RWPE1 (cell line): ENCODE measurements at regions of chr4 and their contacts with region 1.

Region 1: DNA sequence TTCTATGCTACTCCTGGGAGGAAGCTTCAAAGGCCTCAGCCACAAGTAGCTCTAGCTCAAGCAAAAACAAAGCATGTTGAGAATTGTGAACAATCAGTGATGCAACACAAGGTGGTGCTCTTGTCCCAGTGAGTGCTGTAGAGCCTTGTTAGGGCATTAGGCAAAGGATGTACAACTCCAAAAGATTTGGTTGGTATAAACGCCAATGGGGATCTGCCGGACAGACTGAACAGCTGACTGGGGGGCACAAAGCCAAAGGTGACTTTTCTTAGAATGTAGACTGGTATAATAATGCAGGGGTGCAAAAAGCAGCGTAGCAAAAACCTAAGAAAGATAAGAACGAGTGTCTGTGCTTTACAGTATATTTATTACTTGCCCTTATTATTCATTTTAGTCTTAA is 62.6 kb upstream of the ALB start:
- DNase-seq: peak; percentile 14
- H3K27ac ChIP-seq: no peak overlapping the region
- CTCF ChIP-seq: peak; percentile 39

Region 2: GRCh38 chr4:72951147-72951546 is 390.3 kb before region 1 on chr4:
- CTCF ChIA-PET with region 1: no interaction called
- POLR2A ChIA-PET with region 1: no interaction called
- DNase-seq: no peak
- H3K27ac ChIP-seq: no peak overlapping the region
- CTCF ChIP-seq: no peak; the same call in 1 of the 2 replicates

Region 3: DNA sequence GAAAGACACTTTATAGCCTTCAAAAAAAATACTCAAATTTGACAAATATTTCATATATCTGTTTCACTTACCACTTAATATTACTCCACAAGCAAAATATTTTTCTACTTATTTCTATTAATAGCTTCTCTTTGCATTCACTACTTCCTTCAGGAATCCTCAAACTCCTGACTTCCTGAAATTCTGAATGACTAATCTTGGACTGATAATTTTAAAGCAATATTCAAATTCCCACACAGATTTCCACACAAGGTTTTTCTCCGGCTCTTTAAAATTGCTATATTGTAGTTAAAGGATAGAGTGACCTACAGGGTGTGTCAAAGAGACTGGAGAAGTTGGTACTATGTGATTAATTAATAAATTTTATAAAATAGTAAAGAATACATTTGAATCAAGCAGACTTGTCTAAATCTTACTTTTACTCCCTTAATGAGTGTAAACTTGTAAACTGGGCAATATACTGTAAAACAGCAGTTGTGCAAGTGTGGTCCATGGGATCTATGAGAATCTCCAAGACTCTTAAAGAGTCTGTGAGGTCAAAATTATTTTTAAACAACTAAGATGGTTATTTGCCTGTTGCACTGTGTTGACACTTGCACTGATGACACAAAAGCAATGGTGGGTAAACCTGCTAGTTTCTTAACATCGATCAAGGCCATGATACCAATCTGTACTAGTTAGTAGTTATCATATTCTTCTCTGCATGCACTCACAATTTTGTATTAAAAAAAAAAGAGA is 127.4 kb before region 1 on chr4:
- CTCF ChIA-PET with region 1: no interaction called
- POLR2A ChIA-PET with region 1: no interaction called
- DNase-seq: no peak
- H3K27ac ChIP-seq: no peak overlapping the region
- CTCF ChIP-seq: no peak

Region 4: DNA sequence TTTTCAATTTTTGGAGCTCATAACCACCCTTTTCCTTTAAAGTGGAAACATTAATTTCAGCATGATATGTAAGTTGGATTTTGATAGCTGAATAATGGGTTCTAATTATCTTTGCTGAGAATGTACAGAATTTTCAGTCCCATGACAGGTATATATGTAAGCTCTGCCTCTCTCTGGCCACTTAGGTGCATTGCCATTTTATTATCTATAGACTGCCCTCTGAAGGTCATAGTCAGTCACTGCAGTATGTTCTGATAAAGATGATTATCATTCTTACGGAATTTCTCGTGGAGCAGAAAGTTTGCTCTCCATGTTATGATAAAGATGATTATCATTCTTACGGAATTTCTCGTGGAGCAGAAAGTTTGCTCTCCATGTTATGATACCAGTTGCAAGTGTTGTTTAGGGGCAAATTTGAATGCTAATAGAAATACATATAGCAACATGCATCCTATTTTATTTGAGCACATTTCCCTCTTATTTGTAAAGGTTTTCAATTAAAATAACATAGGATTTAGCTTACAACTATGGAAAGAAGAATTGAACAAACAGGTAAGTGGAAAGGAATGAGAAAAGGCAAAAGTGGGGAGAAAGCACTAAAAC is 105.0 kb after region 1 on chr4:
- CTCF ChIA-PET with region 1: interaction called, 14 read pairs
- POLR2A ChIA-PET with region 1: no interaction called
- DNase-seq: peak; percentile 45
- H3K27ac ChIP-seq: no peak overlapping the region
- CTCF ChIP-seq: peak; percentile 76